Dendritic cell treated with granulocyte-macrophage colony-stimulating factor and Interleukin-4, amounts not matched to agents 40 ng/mL and 50 ng/mL, for 4 days (primary cell): ENCODE measurements at regions of chr4 and their contacts with region 1.

Region 1: GRCh38 chr4:120156120-120156718 is 89.6 kb upstream of the MAD2L1 start:
- H3K4me3 Mint-ChIP-seq: no peak overlapping the region
- H3K27ac Mint-ChIP-seq: no peak overlapping the region
- H3K4me1 Mint-ChIP-seq: no peaks in the 10 kb centered on the region
- H3K27me3 Mint-ChIP-seq: peaks cover under 1% of the 10 kb centered on the region

Region 2: DNA sequence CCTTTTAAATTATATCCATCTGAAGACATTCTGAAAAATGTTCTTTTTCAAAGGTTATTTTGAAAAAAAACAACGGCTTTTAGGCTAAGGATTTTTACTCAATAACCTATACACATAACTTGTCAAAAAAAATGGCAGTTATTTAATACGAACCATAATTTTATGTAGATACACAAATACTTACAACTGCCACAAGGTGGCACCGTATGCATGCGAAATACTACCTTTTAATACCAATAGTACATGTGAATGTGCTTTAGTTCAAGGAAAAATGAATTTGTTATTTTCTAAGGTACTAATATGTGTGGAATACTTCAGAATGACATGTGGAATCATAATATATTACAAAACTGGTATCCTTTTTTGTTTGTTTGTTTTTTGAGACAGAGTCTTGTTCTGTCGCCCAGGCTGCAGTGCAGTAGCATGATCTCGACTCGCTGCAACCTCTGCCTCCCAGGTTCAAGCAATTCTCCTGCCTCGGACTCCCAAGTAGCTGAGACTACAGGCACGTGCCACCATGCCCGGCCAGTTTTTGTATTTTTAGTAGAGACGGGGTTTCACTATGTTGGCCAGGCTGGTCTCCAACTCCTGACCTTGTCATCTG is 84.9 kb before region 1 on chr4:
- intact Hi-C with region 1: loop called (anchors 10 kb)
- H3K4me3 Mint-ChIP-seq: no peak overlapping the region
- H3K27ac Mint-ChIP-seq: no peak overlapping the region
- H3K4me1 Mint-ChIP-seq: peaks cover 13% of the 10 kb centered on the region
- H3K27me3 Mint-ChIP-seq: no peaks in the 10 kb centered on the region

Region 3: DNA sequence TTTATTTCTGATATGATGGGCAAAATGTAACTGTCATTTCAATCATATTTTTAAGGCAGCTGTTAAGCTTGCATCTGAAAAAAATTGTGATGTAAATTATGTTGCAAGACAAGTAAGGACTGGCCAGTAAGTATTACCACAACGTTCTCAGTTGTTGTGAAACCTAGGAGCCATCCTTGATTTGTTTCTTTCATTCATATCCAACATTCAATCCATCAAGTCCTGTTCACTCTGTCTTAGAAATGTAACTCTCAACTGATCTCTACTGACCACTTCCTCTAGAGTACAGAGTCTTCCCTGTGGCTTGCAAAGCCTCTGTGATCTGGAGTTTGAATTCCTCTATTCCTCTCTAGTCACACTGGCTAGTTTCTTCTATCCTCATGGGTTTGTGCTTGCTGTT is 71.9 kb after region 1 on chr4:
- intact Hi-C with region 1: no loop called
- H3K4me3 Mint-ChIP-seq: no peak overlapping the region
- H3K27ac Mint-ChIP-seq: no peak overlapping the region
- H3K4me1 Mint-ChIP-seq: no peaks in the 10 kb centered on the region
- H3K27me3 Mint-ChIP-seq: no peaks in the 10 kb centered on the region

Region 4: DNA sequence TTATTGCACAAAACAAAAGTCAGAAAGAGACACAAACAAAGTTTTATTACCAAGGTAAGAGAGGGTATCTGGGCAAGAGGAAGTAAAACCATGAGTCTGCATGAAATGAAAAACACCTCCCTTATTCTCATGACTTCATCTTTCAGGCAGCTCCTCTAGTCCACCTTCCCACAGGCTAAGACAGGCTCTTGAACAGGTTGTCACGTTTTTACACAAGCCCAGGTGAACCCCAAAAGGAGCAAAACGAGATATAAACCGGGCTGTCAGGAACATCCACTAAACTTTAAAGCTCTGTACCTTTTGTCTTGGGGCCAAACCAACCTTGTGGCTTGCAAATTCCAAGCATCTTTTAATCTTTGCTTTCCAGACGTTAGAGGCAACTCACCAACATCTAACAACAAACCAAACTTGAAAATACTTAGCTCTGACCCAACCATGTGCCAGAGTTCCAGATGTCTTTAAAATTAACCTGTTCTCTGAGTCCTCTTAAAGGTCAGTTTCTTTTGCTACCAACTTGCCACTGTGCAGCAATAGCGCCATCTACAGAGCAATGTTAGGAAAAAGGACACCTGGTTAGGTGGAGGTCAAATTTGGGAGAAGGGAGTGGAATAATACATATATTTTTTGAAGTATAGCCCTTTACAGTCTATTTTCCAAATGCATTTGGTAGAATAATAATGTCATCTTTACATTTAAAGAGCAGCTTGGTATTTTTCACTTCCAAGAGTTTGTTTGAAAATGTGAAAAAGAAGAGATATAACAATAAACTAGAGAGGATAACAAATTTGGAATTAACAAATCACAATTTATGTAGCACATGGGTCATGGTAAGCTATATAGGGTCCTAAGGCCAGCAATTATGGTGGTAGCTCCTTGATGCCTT is 1151.5 kb after region 1 on chr4:
- intact Hi-C with region 1: loop called (anchors 2 kb)
- H3K4me3 Mint-ChIP-seq: no peak overlapping the region
- H3K27ac Mint-ChIP-seq: no peak overlapping the region
- H3K4me1 Mint-ChIP-seq: no peaks in the 10 kb centered on the region
- H3K27me3 Mint-ChIP-seq: no peaks in the 10 kb centered on the region